Activated CD4-positive, alpha-beta memory T cell treated with anti-CD3 and anti-CD28 coated beads for 36 hours (primary cell): ENCODE measurements at regions of chr15 and their contacts with region 1.

Region 1: DNA sequence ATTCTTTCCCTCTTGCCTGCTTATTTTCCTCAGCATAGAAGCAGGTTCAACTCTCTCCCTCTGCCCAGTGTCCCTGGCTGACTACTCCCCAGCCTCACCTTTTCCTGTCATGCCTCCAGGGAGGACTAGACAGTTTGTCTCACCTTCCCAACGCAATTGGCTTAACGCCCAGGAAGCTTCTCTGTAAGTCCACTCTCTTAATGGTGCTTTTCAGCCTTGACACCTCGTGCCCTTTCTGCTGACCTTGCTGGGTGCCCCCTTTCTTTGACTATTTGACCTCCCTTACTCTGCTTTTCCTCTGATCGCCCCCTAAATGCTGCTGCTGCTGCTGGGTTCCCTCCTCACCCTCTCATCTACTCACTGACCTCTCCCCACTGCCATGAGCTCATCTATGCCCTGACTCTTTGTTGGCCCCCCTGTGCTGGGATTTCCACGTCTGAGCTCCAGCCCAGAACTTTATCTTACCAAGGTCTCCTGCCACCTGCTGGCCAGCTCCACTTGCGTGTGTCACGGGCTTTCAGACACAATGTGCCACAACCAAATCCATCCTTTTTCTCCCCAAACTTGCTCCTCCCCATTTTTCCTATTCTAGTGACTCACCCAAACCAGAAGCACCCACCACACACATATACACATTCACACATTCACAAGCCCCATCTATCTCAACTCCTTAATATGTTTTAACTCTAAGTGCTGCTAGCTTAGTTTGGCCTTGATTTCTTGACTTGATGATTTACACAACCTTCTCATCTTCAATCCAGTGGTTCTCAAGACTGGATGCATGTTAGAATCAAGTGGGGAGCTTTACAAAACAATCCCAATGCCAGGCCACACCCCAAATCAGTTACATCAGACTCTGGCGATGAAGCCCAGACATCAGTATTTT is 16.6 kb downstream of the EPB42 start:
- DNase-seq: peak; percentile 65
- H3K4me3 Mint-ChIP-seq: no peak overlapping the region
- H3K27ac Mint-ChIP-seq: no peak overlapping the region
- H3K4me1 Mint-ChIP-seq: peaks cover 2% of the 10 kb centered on the region
- H3K27me3 Mint-ChIP-seq: peaks cover 1% of the 10 kb centered on the region

Region 2: GRCh38 chr15:42704492-42704926 is 499.8 kb before region 1 on chr15:
- CTCF ChIA-PET with region 1: interaction called, 5 read pairs
- POLR2A ChIA-PET with region 1: no interaction called
- intact Hi-C with region 1: loop called (anchors 2 kb)
- DNase-seq: peak; percentile 73
- H3K4me3 Mint-ChIP-seq: no peak overlapping the region
- H3K27ac Mint-ChIP-seq: no peak overlapping the region
- H3K4me1 Mint-ChIP-seq: no peaks in the 10 kb centered on the region
- H3K27me3 Mint-ChIP-seq: no peaks in the 10 kb centered on the region

Region 3: GRCh38 chr15:43215961-43216360 is 11.7 kb after region 1 on chr15:
- CTCF ChIA-PET with region 1: interaction called, 13 read pairs
- POLR2A ChIA-PET with region 1: no interaction called
- intact Hi-C with region 1: no loop called
- DNase-seq: no peak
- H3K4me3 Mint-ChIP-seq: no peak overlapping the region
- H3K27ac Mint-ChIP-seq: no peak overlapping the region
- H3K4me1 Mint-ChIP-seq: no peaks in the 10 kb centered on the region
- H3K27me3 Mint-ChIP-seq: peaks cover 4% of the 10 kb centered on the region

Region 4: GRCh38 chr15:43235536-43235935 is 31.3 kb after region 1 on chr15:
- CTCF ChIA-PET with region 1: no interaction called
- POLR2A ChIA-PET with region 1: no interaction called
- intact Hi-C with region 1: no loop called
- DNase-seq: no peak
- H3K4me3 Mint-ChIP-seq: no peak overlapping the region
- H3K27ac Mint-ChIP-seq: no peak overlapping the region
- H3K4me1 Mint-ChIP-seq: peaks cover 4% of the 10 kb centered on the region
- H3K27me3 Mint-ChIP-seq: peaks cover 8% of the 10 kb centered on the region

Region 5: DNA sequence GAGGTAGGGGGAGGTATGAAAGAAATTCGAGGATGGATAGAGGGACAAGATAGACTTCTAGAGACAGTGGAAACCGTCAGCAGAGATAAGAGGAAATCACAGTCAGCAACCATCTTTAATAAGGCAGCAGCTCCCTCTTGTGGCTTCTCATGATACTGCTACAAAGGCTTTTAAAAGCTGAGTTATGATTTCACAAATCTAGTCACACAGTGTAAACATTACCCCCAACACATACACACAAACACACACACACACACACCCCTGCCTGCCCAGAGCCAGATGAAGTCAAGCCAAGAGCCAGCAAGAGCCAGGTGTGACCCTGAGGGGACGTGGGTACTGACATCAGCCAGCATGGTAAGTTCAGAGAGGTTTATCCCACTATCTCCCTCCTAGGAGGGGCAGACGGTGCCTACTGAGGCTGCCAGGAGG is 81.4 kb after region 1 on chr15:
- CTCF ChIA-PET with region 1: interaction called, 17 read pairs
- POLR2A ChIA-PET with region 1: no interaction called
- intact Hi-C with region 1: no loop called
- DNase-seq: peak; percentile 62
- H3K4me3 Mint-ChIP-seq: no peak overlapping the region
- H3K27ac Mint-ChIP-seq: no peak overlapping the region
- H3K4me1 Mint-ChIP-seq: peaks cover 2% of the 10 kb centered on the region
- H3K27me3 Mint-ChIP-seq: peaks cover 7% of the 10 kb centered on the region